ENCODE measurements at regions of chr2 and their contacts with region 1.

Region 1: GRCh38 chr2:71923887-71924533 is 223.7 kb downstream of the CYP26B1 start:
- DNase-seq: peak; percentile 68
- ATAC-seq: peak; percentile 89

Region 2: GRCh38 chr2:71545572-71546274 is 378.3 kb before region 1 on chr2:
- intact Hi-C with region 1: loop called (anchors 5 kb)
- DNase-seq: no peak
- ATAC-seq: peak; percentile 81

Region 3: DNA sequence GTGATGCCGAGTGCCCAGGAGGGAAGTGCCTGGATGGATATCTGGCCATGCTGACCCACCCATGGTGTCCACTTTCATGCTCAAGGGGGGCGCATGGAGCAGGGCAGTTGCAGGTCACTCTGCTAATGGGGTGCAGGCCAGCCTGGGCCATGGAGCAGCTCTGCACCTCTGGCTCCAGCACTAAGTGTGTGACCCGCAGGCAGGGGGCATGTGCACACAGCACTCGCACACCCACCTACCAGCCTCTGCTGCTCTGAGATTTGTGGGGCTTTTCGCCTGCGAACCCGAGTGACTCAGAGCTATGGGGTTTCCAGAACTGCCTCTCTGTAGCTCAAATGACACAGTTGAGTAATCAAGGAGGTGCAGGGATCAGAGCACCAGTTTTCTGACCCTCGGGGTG is 157.4 kb after region 1 on chr2:
- intact Hi-C with region 1: no loop called
- DNase-seq: no peak
- ATAC-seq: no peak

Region 4: DNA sequence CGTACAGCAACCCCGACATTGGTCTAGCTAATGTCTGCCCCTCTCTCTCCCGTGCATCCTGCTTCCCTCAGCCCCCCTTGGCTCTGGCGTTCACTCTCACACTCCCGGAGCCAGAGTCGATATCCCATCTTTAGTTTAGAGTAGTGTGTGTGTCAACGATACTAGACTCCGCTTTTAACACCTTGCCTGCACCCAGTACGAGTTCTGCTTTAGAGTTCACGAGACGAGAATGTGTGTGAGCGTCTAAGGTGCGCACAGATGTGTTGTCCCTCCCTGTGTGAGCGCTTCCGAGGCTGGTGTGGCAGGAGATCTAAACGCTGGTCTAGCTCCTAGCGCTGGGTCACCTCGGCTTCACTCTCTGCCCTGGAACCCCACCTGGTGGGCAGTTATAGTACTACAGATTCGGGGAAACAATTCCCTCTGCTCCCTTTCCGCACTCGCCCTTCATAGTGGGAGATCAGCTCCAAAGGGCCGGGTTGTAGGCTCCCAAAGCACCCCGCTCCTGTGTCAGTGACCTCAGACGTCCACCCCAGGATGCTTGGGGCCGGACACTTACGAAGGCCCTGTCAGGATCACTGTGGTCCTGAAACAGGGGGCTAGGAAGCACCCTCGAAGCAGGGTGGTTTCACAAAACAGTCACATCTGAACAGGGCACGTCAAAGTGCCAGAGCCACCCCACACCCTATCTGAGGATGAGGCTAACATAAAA is 226.3 kb after region 1 on chr2:
- intact Hi-C with region 1: loop called (anchors 5 kb)
- DNase-seq: peak; percentile 68
- ATAC-seq: peak; percentile 81

Region 5: GRCh38 chr2:72579591-72580180 is 655.7 kb after region 1 on chr2:
- intact Hi-C with region 1: loop called (anchors 5 kb)
- DNase-seq: no peak
- ATAC-seq: peak; percentile 73

Region 6: DNA sequence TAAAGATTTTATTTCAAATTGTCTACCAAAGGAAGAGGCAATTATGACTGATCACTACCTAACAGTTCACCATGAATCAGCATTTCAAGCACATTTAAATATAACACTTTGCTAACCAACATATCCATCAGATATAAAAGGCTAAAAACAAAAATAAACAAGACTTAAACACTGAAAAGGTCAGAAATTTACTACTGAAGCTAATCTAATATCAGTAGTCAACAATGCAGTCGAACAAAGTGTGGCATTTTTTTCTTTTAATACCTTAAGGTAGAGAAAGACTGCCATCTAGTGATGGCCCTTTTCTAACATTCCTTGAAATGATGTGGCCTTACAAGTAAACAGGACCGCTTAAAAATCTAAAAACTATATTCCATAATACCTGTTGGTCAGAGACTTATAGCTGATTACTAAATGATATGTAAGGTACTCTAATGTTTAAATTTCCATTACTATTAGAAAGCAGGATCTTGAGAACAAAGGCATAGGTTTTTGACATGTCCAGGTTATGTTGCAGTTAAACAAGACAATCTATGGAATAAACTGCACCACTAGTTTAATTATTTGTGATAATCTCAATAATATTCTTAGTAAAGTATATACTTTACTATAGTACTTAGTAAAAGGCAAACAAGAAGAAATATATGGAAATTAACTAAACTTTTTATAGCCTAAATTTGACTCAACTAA is 821.8 kb after region 1 on chr2:
- intact Hi-C with region 1: loop called (anchors 10 kb)
- DNase-seq: no peak
- ATAC-seq: peak; percentile 59